Adrenal gland (tissue), 19 donors: ENCODE measurements at regions of chr17 and their contacts with region 1.

Region 1: GRCh38 chr17:79188048-79188447 is 113.4 kb downstream of the ENGASE start:
- DNase-seq: peak in 1 of 7 donors; percentile 22
- H3K4me3 ChIP-seq: no peak overlapping the region
- H3K27ac ChIP-seq: no peak overlapping the region
- H3K4me1 ChIP-seq: no peaks in the 10 kb centered on the region
- H3K27me3 ChIP-seq: peaks cover 47% of the 10 kb centered on the region
- CTCF ChIP-seq: peak in 5 of 6 experiments; percentile 17 to 42 (median 38)
- POLR2A ChIP-seq: no peak

Region 2: DNA sequence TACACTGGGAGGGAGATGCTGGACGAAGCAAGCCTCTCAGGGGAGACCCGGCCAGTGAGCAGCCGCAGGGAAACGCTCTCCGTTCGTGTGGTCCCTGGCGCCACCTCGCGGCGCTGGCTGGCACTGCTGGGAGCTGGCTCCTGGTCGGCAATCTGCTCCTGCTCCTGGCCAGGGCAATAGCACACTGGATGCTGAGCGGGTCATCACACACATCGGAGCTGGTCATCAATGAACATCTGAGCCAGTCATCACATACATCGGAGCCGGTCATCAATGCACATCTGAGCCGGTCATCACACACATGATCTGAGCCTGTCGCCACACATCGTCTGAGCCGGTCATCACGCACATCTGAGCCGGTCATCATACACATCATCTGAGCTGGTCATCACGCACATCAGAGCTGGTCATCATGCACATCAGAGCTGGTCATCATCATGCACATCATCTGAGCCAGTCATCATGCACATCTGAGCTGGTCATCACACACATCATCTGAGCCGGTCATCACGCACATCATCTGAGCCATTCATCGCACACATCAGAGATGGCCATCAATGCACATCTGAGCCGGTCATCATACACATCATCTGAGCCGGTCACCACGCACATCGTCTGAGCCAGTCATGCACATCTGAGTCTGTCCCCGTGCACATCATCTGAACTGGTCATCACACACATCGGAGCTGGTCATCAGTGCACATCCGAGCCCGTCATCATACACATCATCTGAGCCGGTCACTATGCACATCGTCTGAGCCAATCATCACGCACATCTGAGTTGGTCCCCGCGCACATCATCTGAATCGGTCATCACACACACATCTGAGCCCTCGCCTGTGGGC is 205.5 kb after region 1 on chr17:
- intact Hi-C with region 1: loop called in 1 of 2 experiments (anchors 5 kb)
- DNase-seq: peak; percentile 69 to 92 (median 82)
- H3K4me3 ChIP-seq: no peak overlapping the region
- H3K27ac ChIP-seq: no peak overlapping the region
- H3K4me1 ChIP-seq: no peaks in the 10 kb centered on the region
- H3K27me3 ChIP-seq: peaks cover 53% of the 10 kb centered on the region
- CTCF ChIP-seq: peak; percentile 86 to 93 (median 88)
- POLR2A ChIP-seq: no peak